Posterior vena cava (tissue), 2 donors: ENCODE measurements at regions of chr16 and their contacts with region 1.

Region 1: GRCh38 chr16:2278272-2278608 is 10.3 kb upstream of the RNPS1 start:
- DNase-seq: no peak

Region 2: GRCh38 chr16:2160915-2161551 is 117.2 kb before region 1 on chr16:
- intact Hi-C with region 1: loop called in 1 of 2 experiments (anchors 10 kb)
- DNase-seq: peak; percentile 91

Region 3: DNA sequence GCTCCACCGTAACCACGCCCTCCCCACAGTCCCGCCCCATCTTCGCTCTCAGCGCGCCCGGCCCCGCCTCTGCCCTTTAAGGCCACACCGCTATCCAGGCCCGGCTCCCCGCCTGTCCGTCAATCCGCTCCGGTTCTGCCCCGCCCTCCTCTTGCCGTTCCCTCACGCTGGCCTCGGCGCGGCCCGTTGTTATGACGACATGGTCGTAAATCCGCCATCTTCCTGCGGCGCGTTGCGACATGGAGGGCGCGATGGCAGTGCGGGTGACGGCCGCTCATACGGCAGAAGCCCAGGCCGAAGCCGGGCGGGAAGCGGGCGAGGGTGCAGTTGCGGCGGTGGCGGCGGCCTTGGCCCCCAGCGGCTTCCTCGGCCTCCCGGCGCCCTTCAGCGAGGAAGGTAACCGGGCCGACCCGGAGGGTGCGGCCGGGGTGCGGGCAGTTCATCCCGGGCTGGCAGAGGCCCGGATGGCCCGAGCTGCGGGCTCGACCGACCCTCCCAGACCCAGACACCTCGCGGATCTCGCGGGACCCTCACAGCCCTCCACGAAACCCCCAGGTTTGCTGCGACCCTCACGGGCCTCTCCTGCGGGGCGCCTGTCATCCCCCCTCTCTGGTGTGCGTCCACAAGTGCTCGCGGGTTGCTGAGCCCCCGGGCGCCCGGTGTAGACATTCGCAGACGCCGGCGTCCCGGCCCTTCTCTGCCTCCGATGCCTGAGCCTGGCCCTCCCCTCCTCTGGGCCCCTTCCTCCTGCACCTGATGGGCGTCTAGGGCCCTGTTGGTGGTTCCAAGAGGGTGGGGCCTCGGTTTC is 54.7 kb before region 1 on chr16 and contains the start of gene E4F1:
- intact Hi-C with region 1: loop called in 1 of 2 experiments (anchors 10 kb)
- DNase-seq: peak; percentile 100
- total RNA-seq, gene E4F1: 15.5 to 19.3 TPM